Right cardiac atrium (tissue), 5 donors: ENCODE measurements at regions of chr5 and their contacts with region 1.

Region 1: GRCh38 chr5:134577796-134578363 is 52.4 kb downstream of the JADE2 start:
- DNase-seq: peak; percentile 81 to 93 (median 89)
- ATAC-seq: peak; percentile 41 to 60
- H3K4me3 ChIP-seq: no peak overlapping the region
- H3K27ac ChIP-seq: no peak overlapping the region
- H3K4me1 ChIP-seq: peaks cover 4% of the 10 kb centered on the region
- H3K27me3 ChIP-seq: no peaks in the 10 kb centered on the region

Region 2: DNA sequence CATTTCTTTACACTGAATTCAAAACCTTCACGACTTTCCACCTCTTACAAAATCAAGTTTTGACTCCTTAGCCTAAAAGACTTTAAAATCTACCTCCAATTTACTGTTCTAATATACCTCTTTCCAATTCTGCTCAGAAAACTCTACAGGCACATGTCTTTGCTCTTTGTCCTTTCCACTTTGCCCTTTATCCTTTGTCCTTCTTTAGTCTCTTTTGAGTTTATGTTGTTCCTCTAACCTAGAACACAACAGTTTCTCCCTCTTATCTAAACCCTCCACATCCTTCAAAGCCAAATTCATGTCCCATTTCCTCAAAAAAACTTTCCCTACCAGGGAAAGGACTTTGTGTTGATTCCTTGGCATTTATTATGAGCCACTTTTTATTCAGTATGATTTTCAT is 212.3 kb before region 1 on chr5:
- intact Hi-C with region 1: loop called in 1 of 4 experiments (anchors 10 kb)
- DNase-seq: no peak
- ATAC-seq: no peak
- H3K4me3 ChIP-seq: no peak overlapping the region
- H3K27ac ChIP-seq: no peak overlapping the region
- H3K4me1 ChIP-seq: peaks cover 3% of the 10 kb centered on the region
- H3K27me3 ChIP-seq: no peaks in the 10 kb centered on the region

Region 3: DNA sequence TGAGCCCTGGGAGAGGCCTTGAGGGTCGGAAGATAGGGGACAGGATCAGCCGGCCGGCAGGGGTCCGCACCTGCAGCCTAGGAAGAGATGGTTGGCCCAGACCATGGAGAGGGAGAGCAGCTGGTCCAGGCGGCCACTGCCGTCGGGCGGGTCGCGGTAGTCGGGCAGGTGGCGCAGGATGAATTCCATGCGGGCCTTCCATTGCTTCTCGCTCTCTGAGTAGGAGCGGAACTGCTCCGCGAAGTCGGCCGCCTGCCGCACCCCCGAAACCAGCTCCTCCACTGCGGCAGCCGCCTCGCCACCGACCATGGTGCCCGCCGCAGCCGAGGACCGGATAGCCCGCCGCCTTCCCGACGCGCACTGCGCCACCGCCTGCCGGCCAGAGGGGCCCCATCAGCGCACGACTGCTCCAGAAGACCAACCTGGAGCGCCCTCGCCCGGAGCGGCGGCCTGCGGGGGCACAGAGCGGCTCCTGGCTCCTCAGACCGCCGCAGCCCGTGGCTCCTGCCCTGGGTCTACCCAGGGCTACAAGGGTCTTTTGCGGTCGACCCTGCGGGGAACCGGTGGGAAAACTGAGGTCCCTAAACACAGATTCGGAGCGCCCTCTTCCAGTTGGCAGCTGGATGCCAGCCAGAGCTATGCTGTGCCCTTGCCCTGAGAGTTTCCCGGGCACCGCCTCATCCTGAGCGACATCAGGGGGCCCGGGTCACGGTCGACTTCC is 166.2 kb before region 1 on chr5 and contains the start of gene CDKN2AIPNL:
- intact Hi-C with region 1: loop called in 1 of 4 experiments (anchors 5 kb)
- DNase-seq: peak; percentile 94 to 97 (median 97)
- ATAC-seq: peak; percentile 99
- H3K4me3 ChIP-seq: peak within 1 kb of the TSS; percentile 81
- H3K27ac ChIP-seq: peak within 1 kb of the TSS; percentile 73
- H3K4me1 ChIP-seq: peaks cover 2% of the 10 kb centered on the region
- H3K27me3 ChIP-seq: no peaks in the 10 kb centered on the region
- total RNA-seq, gene CDKN2AIPNL: 33.5 to 42.0 (median 37.5) TPM

Region 4: GRCh38 chr5:134451936-134452505 is 125.9 kb before region 1 on chr5:
- intact Hi-C with region 1: no loop called
- DNase-seq: peak; percentile 48 to 79 (median 66)
- ATAC-seq: peak; percentile 80 to 85
- H3K4me3 ChIP-seq: no peak overlapping the region
- H3K27ac ChIP-seq: peak overlapping the region; percentile 62
- H3K4me1 ChIP-seq: peaks cover 8% of the 10 kb centered on the region
- H3K27me3 ChIP-seq: no peaks in the 10 kb centered on the region

Region 5: GRCh38 chr5:134527146-134527960 is 50.5 kb before region 1 on chr5:
- intact Hi-C with region 1: loop called in 2 of 4 experiments (anchors 5 kb)
- DNase-seq: peak; percentile 92 to 96 (median 96)
- ATAC-seq: peak; percentile 66 to 72
- H3K4me3 ChIP-seq: peak overlapping the region; percentile 95
- H3K27ac ChIP-seq: peak overlapping the region; percentile 94
- H3K4me1 ChIP-seq: peaks cover 26% of the 10 kb centered on the region
- H3K27me3 ChIP-seq: no peaks in the 10 kb centered on the region